Activated CD4-positive, alpha-beta T cell treated with anti-CD3 and anti-CD28 coated beads for 36 hours (primary cell): ENCODE measurements at regions of chr3 and their contacts with region 1.

Region 1: DNA sequence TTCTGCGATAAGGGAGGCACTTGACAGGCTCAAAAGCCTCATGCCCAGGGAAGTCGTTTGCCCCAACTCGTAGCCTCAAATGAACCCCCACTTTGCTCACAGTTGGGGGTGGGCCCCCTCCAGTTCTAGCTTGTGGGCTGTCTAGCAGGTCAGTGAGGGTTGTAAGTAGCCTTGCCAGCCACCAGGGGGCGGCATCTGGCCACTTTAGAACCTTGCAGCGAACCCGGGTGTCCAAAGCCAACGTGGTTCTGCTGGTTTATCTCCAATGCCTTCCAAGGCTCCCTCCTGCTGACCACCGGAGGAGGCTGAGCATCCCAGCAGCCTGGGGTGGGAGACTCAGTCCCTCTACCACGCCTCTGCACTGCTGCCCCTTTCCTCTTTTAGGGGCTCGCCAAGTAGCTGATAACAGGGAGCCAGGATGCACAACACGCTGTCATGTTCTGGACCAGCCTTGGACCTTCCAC is 9.2 kb upstream of the RBSN start:
- DNase-seq: peak; percentile 86
- ATAC-seq: peak; percentile 96
- H3K4me3 Mint-ChIP-seq: no peak overlapping the region
- H3K27ac Mint-ChIP-seq: no peak overlapping the region
- H3K4me1 Mint-ChIP-seq: no peaks in the 10 kb centered on the region
- H3K27me3 Mint-ChIP-seq: peaks cover 3% of the 10 kb centered on the region

Region 2: DNA sequence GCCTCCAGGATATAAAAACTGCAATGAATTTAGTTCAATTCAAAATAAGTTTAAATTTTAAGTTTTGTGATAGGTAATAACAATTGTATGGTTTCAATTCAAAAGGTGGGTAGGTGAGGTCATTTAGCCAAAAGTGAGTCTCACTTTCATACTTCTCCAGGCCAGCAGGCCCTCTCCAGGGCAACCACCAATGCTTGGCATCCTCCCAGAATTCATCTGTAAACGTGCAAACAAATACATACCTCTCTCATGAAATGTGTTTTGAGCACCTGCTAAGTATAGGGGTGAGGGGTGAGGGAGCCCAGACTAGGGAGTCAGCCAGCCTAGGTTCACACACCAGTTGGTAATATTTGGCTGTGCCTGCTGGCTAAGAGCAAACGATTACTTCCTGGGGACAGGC is 12.9 kb after region 1 on chr3:
- CTCF ChIA-PET with region 1: interaction called, 40 read pairs
- POLR2A ChIA-PET with region 1: no interaction called
- intact Hi-C with region 1: no loop called
- DNase-seq: no peak
- ATAC-seq: no peak
- H3K4me3 Mint-ChIP-seq: no peak overlapping the region
- H3K27ac Mint-ChIP-seq: no peak overlapping the region
- H3K4me1 Mint-ChIP-seq: peaks cover 5% of the 10 kb centered on the region
- H3K27me3 Mint-ChIP-seq: no peaks in the 10 kb centered on the region

Region 3: DNA sequence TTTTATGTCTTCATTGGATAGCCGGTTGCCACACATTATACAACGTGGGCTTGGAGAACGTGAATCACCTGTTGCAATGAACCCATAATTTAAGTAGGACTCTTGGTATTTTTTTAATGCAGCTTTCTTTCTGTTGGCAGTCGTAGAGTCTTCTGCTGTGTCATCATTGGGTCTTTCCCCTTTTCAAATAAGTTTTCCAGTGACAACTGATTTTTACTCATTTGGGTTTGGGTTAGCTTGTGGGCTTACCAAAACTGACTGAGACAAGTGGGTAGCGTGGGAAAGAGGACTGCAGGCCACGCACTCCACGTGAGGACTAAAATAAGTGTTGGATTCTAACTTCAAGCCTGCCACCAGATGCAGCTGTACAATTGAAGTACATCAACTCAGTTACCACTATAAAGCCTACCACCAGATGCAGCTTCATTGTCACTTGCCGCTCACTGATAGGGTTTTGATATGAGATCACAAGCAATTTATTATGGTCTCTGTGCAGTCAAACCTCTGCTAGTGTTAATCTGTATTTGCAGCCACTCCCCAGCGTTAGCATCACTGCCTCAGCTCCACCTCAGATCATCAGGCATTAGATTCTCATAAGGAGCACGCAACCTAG is 91.5 kb after region 1 on chr3:
- CTCF ChIA-PET with region 1: interaction called, 24 read pairs
- POLR2A ChIA-PET with region 1: no interaction called
- intact Hi-C with region 1: no loop called
- DNase-seq: peak; percentile 21
- ATAC-seq: peak; percentile 10
- H3K4me3 Mint-ChIP-seq: no peak overlapping the region
- H3K27ac Mint-ChIP-seq: no peak overlapping the region
- H3K4me1 Mint-ChIP-seq: peaks cover 13% of the 10 kb centered on the region
- H3K27me3 Mint-ChIP-seq: no peaks in the 10 kb centered on the region

Region 4: GRCh38 chr3:15399970-15400369 is 291.9 kb after region 1 on chr3:
- CTCF ChIA-PET with region 1: interaction called, 5 read pairs
- POLR2A ChIA-PET with region 1: no interaction called
- intact Hi-C with region 1: loop called (anchors 2 to 5 kb)
- DNase-seq: no peak
- ATAC-seq: no peak
- H3K4me3 Mint-ChIP-seq: no peak overlapping the region
- H3K27ac Mint-ChIP-seq: no peak overlapping the region
- H3K4me1 Mint-ChIP-seq: peaks cover 14% of the 10 kb centered on the region
- H3K27me3 Mint-ChIP-seq: no peaks in the 10 kb centered on the region

Region 5: GRCh38 chr3:15557511-15557946 is 449.4 kb after region 1 on chr3:
- CTCF ChIA-PET with region 1: no interaction called
- POLR2A ChIA-PET with region 1: no interaction called
- intact Hi-C with region 1: loop called (anchors 5 to 10 kb)
- DNase-seq: peak; percentile 75
- ATAC-seq: peak; percentile 87
- H3K4me3 Mint-ChIP-seq: no peak overlapping the region
- H3K27ac Mint-ChIP-seq: no peak overlapping the region
- H3K4me1 Mint-ChIP-seq: peaks cover 10% of the 10 kb centered on the region
- H3K27me3 Mint-ChIP-seq: no peaks in the 10 kb centered on the region

Region 6: GRCh38 chr3:15601397-15602145 is 493.5 kb after region 1 on chr3 and contains the starts of genes BTD and HACL1:
- CTCF ChIA-PET with region 1: no interaction called
- POLR2A ChIA-PET with region 1: no interaction called
- intact Hi-C with region 1: no loop called
- DNase-seq: peak; percentile 99
- ATAC-seq: peak; percentile 94
- H3K4me3 Mint-ChIP-seq: peak within 1 kb of the TSS; percentile 100
- H3K27ac Mint-ChIP-seq: peak within 1 kb of the TSS; percentile 98
- H3K4me1 Mint-ChIP-seq: peaks cover 41% of the 10 kb centered on the region
- H3K27me3 Mint-ChIP-seq: no peaks in the 10 kb centered on the region
- total RNA-seq, gene BTD: 3.8 to 4.4 TPM
- total RNA-seq, gene HACL1: 22.3 to 23.2 TPM